Activated CD8-positive, alpha-beta memory T cell treated with anti-CD3 and anti-CD28 coated beads, Interleukin-2, amount 10 ng/mL, durations not matched to agents 7 days and 5 days (primary cell): ENCODE measurements at regions of chr14 and their contacts with region 1.

Region 1: DNA sequence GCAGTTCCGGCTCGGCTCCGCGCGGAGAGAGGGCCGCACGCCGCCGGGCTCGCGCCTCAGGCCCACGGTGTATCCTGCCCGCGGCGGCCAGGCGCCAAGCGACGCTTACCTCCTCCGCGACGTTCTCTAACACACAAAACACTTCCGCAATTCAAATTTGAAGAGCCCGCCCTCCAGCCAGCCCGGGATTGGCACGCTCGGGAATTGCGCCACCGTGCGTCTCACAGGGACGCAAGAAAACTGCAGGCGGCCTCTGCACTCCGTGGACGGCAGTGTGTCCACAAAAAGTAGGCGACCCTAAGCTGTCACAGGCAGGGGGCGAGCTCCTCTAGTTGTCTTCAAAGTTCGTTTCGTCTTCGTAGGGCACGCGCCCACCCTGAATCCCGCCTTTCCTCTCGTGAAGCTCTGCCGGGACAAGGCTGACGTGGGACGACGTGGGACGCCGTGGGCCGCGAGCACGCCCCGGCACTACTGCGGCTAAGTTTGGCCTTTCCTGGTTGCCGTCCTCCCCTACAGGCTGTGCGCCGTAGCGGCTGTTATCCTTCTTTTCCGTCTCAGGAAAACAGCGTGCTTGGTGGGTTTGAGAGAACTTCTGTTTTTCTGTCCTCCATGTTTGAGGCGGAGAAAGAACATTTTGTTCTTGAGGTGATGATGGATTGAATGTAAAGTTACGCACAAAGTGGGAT is at the start of gene MIS18BP1:
- DNase-seq: peak; percentile 97
- ATAC-seq: peak; percentile 94
- H3K4me3 Mint-ChIP-seq: peak within 1 kb of the TSS; percentile 90
- H3K27ac Mint-ChIP-seq: peak within 1 kb of the TSS; percentile 91
- H3K4me1 Mint-ChIP-seq: peaks cover 25% of the 10 kb centered on the region
- H3K27me3 Mint-ChIP-seq: no peaks in the 10 kb centered on the region
- total RNA-seq, gene MIS18BP1: 59.8 to 70.8 TPM

Region 2: DNA sequence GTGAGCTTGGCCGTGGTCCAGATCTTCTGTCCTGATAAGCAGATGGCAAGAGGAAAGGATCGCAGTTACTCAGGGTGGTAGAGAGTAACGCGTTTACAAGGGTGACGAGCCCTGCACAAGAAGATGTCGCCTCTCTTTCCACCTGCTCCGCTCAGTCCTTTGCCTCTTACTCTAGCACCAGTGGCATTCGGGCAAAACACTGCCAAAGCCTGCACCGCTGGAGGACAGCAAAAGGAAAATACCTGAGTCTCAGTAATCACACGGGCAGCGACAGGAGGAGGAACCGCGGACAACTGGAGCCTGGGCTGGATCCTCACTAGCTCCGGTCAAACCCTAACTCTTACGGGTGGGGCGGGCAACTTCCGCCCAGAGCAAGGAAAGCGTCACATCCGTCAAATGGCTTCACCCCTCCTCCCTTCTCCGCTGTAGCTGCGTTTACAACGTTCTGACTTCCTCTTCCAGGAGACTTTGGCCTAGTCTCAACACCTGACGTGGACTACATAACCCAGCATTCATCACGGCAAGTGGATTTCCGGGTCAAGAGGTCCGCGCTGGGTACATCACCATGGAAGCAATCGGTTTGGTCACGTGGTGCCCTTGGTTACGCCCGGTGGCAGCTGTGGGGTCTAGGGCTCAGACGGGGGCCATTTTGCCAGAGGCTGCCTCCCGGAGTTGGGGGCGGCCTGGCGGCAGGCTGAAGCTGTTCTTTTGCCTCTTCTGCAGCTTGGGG is 291.4 kb before region 1 on chr14 and contains the starts of genes KLHL28 and TOGARAM1:
- CTCF ChIA-PET with region 1: interaction called, 11 read pairs
- DNase-seq: peak; percentile 99
- ATAC-seq: peak; percentile 93
- H3K4me3 Mint-ChIP-seq: no peak within 1 kb of the TSS
- H3K27ac Mint-ChIP-seq: no peak within 1 kb of the TSS
- H3K4me1 Mint-ChIP-seq: peaks cover 50% of the 10 kb centered on the region
- H3K27me3 Mint-ChIP-seq: no peaks in the 10 kb centered on the region
- total RNA-seq, gene KLHL28: 12.1 to 14.0 TPM
- total RNA-seq, gene TOGARAM1: 8.2 to 10.7 TPM

Region 3: GRCh38 chr14:45060551-45060950 is 192.7 kb before region 1 on chr14:
- CTCF ChIA-PET with region 1: no interaction called
- DNase-seq: no peak
- ATAC-seq: no peak
- H3K4me3 Mint-ChIP-seq: no peak overlapping the region
- H3K27ac Mint-ChIP-seq: no peak overlapping the region
- H3K4me1 Mint-ChIP-seq: no peaks in the 10 kb centered on the region
- H3K27me3 Mint-ChIP-seq: no peaks in the 10 kb centered on the region

Region 4: DNA sequence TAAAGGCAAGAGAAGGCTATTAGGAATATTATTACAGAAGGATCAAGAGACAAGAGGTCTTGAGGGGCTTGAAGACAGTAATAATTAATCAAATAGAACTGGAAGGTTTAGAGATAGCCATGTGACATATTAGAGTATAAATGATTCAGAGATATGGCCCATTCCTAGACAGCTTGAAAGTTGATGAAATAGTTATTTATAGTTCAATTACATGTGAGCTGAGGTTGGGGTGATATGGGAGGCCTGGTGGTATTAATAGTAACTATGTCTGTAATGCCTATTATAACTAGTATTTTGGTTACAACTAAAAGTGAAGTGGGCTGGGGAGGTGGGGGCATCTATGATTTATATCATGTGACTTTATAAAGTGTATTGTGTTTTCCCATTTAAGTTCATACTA is 13.9 kb after region 1 on chr14:
- CTCF ChIA-PET with region 1: interaction called, 27 read pairs
- DNase-seq: no peak
- ATAC-seq: no peak
- H3K4me3 Mint-ChIP-seq: no peak overlapping the region
- H3K27ac Mint-ChIP-seq: no peak overlapping the region
- H3K4me1 Mint-ChIP-seq: peaks cover 4% of the 10 kb centered on the region
- H3K27me3 Mint-ChIP-seq: peaks cover 10% of the 10 kb centered on the region